ENCODE measurements at regions of chr18 and their contacts with region 1.

Region 1: GRCh38 chr18:42114310-42114943 is 159.4 kb downstream of the PIK3C3 start:
- DNase-seq: peak in 1 of 2 donors; percentile 24
- H3K4me3 ChIP-seq: no peak overlapping the region
- H3K27ac ChIP-seq: peak overlapping the region; percentile 20
- H3K4me1 ChIP-seq: no peaks in the 10 kb centered on the region
- H3K27me3 ChIP-seq: no peaks in the 10 kb centered on the region
- CTCF ChIP-seq: peak in 2 of 3 donors; percentile 75 to 86
- POLR2A ChIP-seq: no peak

Region 2: DNA sequence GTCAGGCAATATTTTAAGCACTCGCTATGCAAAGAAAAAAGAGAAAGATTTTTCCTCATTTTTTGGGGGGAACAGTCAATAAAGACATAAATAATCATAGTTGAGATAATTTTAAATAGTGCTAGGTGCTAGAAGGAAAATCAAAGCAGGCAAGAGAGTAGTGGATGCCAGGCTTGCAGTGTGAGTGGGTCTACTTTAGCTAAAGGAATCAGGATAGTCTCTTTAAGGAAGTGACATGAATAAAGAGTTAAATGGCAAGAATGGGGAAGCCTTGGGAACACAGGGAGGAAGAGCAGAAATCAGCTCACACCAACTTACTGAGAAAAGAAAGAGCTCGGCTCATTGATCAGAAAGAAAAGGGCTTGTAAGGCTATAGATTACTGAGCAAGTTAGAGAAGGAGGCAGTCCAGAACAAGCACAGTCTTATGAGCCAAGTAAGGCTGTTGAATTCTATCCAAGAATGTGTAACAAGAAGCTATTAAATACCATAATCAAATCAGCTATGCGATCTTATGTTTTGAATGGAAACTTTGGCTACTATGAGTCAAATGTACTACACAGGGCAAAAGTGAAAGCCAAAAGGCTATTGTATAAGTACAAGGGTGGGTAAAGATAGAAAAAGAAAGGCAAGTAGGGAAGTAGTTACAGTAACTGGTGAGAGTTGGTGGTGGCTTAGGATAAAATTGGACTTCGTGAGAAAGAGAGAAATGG is 993.2 kb before region 1 on chr18:
- intact Hi-C with region 1: no loop called
- DNase-seq: no peak
- H3K4me3 ChIP-seq: no peak overlapping the region
- H3K27ac ChIP-seq: no peak overlapping the region
- H3K4me1 ChIP-seq: no peaks in the 10 kb centered on the region
- H3K27me3 ChIP-seq: no peaks in the 10 kb centered on the region
- CTCF ChIP-seq: no peak
- POLR2A ChIP-seq: no peak

Region 3: GRCh38 chr18:42442661-42443060 is 328.2 kb after region 1 on chr18:
- intact Hi-C with region 1: loop called (anchors 5 kb)
- DNase-seq: no peak
- H3K4me3 ChIP-seq: no peak overlapping the region
- H3K27ac ChIP-seq: no peak overlapping the region
- H3K4me1 ChIP-seq: no peaks in the 10 kb centered on the region
- H3K27me3 ChIP-seq: no peaks in the 10 kb centered on the region
- CTCF ChIP-seq: no peak
- POLR2A ChIP-seq: no peak

Measured in breast epithelium (tissue), 4 donors.